B cell (primary cell): ENCODE measurements at regions of chr3 and their contacts with region 1.

Region 1: GRCh38 chr3:14124615-14125190 is at the starts of genes CHCHD4 and TMEM43:
- DNase-seq: peak; percentile 99
- ATAC-seq: peak; percentile 85
- H3K4me3 ChIP-seq: peak within 1 kb of the TSS; percentile 74 to 97 (median 85)
- H3K4me3 Mint-ChIP-seq: peak within 1 kb of the TSS; percentile 97
- H3K27ac ChIP-seq: peak within 1 kb of the TSS; percentile 72 to 89
- H3K27ac Mint-ChIP-seq: peak within 1 kb of the TSS; percentile 95
- H3K4me1 ChIP-seq: peaks cover 24 to 32% of the 10 kb centered on the region in 2 donors
- H3K4me1 Mint-ChIP-seq: peaks cover 45% of the 10 kb centered on the region
- H3K27me3 ChIP-seq: no peaks in the 10 kb centered on the region
- H3K27me3 Mint-ChIP-seq: no peaks in the 10 kb centered on the region
- CTCF ChIP-seq: no peak
- total RNA-seq, gene CHCHD4: 5.1 and 8.0 TPM in 2 replicates
- total RNA-seq, gene TMEM43: 37.4 and 37.6 TPM in 2 replicates

Region 2: DNA sequence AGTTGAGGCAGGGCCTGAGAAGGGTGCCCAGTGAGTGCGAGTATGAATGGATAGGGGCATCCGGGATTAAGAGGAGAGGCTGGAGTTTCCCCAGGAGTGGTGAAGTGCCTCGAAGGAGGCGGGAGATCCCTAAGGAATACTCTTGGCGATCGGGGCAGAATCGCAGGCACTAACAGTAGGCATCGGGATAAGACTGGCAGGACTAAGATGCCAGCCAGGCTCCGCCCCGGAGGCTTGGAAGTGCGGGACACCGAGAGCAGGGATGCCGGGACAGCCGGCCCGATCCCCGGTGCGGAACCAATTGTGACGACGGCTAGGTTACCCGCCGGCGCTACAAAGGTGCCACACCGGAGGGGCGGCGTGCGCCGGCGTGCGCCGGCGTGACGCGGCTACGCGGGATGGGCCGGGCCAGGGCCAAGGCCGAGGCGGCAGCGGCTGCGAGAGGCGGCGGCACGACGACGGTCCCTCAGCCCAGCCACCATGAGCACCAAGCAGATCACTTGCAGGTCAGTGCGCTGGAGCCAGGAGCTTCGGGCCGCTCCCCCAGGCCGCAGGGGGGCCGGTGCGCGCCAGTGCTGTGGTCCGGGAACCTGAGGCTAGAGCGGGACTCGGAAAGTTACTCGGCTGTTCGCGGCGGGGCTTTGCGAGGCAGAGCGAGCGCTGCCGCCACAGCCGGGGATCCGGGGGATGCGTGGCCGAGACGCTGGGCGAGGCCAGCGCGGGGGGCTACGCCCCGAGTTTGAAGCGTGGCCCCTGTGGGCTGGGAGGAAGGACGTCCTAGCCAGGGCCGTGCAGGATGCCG is 1567.8 kb before region 1 on chr3 and contains the start of gene MKRN2:
- CTCF ChIA-PET with region 1: no interaction called
- POLR2A ChIA-PET with region 1: no interaction called
- intact Hi-C with region 1: loop called (anchors 5 kb)
- DNase-seq: peak; percentile 91
- ATAC-seq: peak; percentile 96
- H3K4me3 ChIP-seq: peak within 1 kb of the TSS; percentile 85 to 91 (median 90)
- H3K4me3 Mint-ChIP-seq: peak within 1 kb of the TSS; percentile 91
- H3K27ac ChIP-seq: peak within 1 kb of the TSS; percentile 91 to 92
- H3K27ac Mint-ChIP-seq: peak within 1 kb of the TSS; percentile 84
- H3K4me1 ChIP-seq: peaks cover 40 to 41% of the 10 kb centered on the region in 2 donors
- H3K4me1 Mint-ChIP-seq: peaks cover 60% of the 10 kb centered on the region
- H3K27me3 ChIP-seq: peaks cover 0 to 17% (median 5%) of the 10 kb centered on the region in 4 experiments
- H3K27me3 Mint-ChIP-seq: peaks cover 23% of the 10 kb centered on the region
- CTCF ChIP-seq: no peak
- total RNA-seq, gene MKRN2: 25.9 and 29.3 TPM in 2 replicates

Region 3: DNA sequence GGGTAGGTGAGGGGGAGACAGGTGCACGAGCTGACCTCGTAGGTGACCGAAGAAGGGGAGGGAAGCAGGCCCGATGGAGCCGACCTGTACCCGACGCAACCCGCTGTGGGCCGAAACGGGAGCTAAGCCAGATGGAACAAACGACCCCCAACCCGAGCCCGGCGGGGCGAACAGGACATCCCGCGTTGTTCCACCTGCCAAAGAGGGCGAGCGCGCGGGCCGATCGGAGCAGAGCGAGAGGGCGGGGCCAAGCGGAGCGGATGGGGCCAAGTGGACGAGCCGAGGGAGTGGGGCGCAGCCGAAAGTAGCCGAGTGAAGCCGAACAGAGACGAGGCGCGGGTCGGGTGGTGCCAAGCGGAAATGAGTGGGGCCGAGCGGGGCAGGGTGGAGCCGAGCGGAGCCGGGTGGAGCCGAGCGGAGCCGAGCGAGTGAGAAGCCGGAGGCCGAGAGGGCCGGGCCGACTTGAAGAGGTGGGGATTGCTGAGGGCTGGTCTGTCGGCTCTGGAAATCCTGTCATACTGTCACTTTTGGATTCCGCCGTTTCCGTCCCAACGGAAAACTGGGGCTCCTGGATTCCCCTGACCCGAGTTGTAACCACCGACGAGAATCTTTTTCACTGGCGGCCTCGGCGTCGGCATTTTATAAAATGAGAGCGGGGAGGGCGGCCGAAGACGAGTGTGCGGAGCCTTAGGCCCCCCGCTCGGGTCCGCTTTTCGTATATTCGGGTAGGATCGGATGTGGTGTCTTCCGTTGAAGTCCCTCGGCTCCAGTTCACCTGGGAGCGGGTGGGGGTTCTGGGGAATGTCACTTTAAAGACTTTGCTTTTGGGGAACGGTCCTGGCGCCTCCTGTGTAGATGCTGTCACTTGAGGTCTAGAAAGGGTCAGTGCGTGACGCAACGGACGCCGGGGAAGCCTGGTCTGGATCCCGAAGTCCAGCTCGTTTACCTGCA is 229.3 kb before region 1 on chr3:
- CTCF ChIA-PET with region 1: interaction called, 6 read pairs
- POLR2A ChIA-PET with region 1: no interaction called
- intact Hi-C with region 1: loop called (anchors 1 kb)
- DNase-seq: peak; percentile 92
- ATAC-seq: peak; percentile 98
- H3K4me3 ChIP-seq: peak overlapping the region; percentile 32 to 75 (median 64)
- H3K4me3 Mint-ChIP-seq: peak overlapping the region; percentile 89
- H3K27ac ChIP-seq: peak overlapping the region in 1 of 2 donors; percentile 58
- H3K27ac Mint-ChIP-seq: peak overlapping the region; percentile 69
- H3K4me1 ChIP-seq: peaks cover 17 to 33% of the 10 kb centered on the region in 2 donors
- H3K4me1 Mint-ChIP-seq: peaks cover 30% of the 10 kb centered on the region
- H3K27me3 ChIP-seq: peaks cover 0 to 7% (median 0%) of the 10 kb centered on the region in 4 experiments
- H3K27me3 Mint-ChIP-seq: peaks cover 20% of the 10 kb centered on the region
- CTCF ChIP-seq: no peak

Region 4: DNA sequence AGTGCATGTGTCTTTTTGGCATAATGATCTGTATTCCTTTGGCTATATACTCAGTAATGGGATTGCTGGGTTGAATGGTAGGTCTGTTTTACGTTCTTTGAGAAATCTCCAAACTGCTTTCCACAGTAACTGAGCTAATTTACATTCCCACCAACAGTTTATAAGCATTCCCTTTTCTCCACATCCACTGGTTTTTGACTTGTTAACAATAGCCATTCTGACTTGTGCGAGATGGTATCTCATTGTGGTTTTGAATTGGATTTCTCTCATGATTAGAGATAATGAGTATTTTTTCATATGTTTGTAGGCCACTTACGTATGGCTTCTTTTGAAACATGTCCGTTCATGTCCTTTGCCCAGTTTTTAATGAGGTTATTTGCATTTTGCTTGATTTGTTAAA is 117.7 kb before region 1 on chr3:
- CTCF ChIA-PET with region 1: no interaction called
- POLR2A ChIA-PET with region 1: no interaction called
- intact Hi-C with region 1: no loop called
- DNase-seq: no peak
- ATAC-seq: no peak
- H3K4me3 ChIP-seq: no peak overlapping the region
- H3K4me3 Mint-ChIP-seq: no peak overlapping the region
- H3K27ac ChIP-seq: no peak overlapping the region
- H3K27ac Mint-ChIP-seq: no peak overlapping the region
- H3K4me1 ChIP-seq: no peaks in the 10 kb centered on the region
- H3K4me1 Mint-ChIP-seq: no peaks in the 10 kb centered on the region
- H3K27me3 ChIP-seq: peaks cover 0 to 2% (median 0%) of the 10 kb centered on the region in 4 experiments
- H3K27me3 Mint-ChIP-seq: peaks cover 25% of the 10 kb centered on the region
- CTCF ChIP-seq: no peak

Region 5: GRCh38 chr3:14162185-14162584 is 37.5 kb after region 1 on chr3:
- CTCF ChIA-PET with region 1: no interaction called
- POLR2A ChIA-PET with region 1: no interaction called
- intact Hi-C with region 1: loop called (anchors 5 kb)
- DNase-seq: no peak
- ATAC-seq: no peak
- H3K4me3 ChIP-seq: no peak overlapping the region
- H3K4me3 Mint-ChIP-seq: no peak overlapping the region
- H3K27ac ChIP-seq: no peak overlapping the region
- H3K27ac Mint-ChIP-seq: no peak overlapping the region
- H3K4me1 ChIP-seq: no peaks in the 10 kb centered on the region
- H3K4me1 Mint-ChIP-seq: no peaks in the 10 kb centered on the region
- H3K27me3 ChIP-seq: no peaks in the 10 kb centered on the region
- H3K27me3 Mint-ChIP-seq: no peaks in the 10 kb centered on the region
- CTCF ChIP-seq: no peak

Region 6: DNA sequence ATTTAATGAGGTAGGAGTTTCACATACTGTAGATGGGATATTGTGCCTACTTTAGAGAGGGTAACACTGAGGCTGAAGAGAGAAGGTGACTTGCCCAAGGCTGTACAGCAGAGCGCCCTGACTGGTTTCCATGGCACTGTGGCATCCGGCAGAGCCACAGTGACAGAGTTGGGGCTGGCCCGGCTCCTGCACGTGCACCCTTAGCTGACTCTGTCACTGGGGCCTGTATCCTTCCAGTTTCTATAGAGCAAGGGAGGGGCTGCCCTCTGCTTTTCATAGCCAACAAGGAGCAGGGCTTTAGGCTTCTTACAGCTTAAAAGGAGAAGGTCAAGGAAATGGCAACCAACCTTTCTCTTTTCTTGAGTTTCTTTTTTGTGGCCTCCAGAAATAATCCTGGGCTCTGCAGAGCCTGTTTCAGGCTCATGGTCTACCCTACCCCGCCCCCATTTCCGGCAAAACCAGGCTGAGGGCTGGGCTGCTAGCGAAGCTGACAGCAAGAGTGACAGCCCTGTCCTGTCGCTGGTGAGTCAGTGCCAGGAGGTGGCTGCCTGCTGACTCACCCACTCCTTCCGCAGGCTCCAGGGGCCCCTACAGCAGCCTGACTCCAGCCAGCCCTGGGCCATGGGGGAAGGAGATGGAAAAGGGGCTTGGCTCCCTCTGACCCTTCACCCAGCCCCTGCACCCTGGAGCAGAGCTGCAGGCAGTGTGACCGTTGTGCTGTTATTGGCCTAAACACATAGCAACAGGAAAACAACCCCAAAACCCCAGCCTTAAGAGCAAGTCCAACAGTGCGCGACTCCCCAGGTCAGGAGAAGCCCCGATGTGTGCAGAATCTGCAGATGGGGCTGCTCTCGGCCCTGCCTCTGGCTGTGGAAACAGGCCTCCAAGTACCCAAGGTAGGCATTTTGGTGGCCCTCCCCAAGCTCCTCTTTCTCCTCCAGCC is 307.5 kb after region 1 on chr3:
- CTCF ChIA-PET with region 1: no interaction called
- POLR2A ChIA-PET with region 1: interaction called, 3 read pairs
- intact Hi-C with region 1: loop called (anchors 1 kb)
- DNase-seq: peak; percentile 94
- ATAC-seq: peak; percentile 78
- H3K4me3 ChIP-seq: peak overlapping the region in 4 of 5 experiments; percentile 5 to 59 (median 34)
- H3K4me3 Mint-ChIP-seq: peak overlapping the region; percentile 80
- H3K27ac ChIP-seq: peak overlapping the region; percentile 93 to 98
- H3K27ac Mint-ChIP-seq: peak overlapping the region; percentile 94
- H3K4me1 ChIP-seq: peaks cover 75 to 89% of the 10 kb centered on the region in 2 donors
- H3K4me1 Mint-ChIP-seq: peaks cover 88% of the 10 kb centered on the region
- H3K27me3 ChIP-seq: no peaks in the 10 kb centered on the region
- H3K27me3 Mint-ChIP-seq: no peaks in the 10 kb centered on the region
- CTCF ChIP-seq: no peak